Vagina (tissue), 2 donors: ENCODE measurements at regions of chr16 and their contacts with region 1.

Region 1: DNA sequence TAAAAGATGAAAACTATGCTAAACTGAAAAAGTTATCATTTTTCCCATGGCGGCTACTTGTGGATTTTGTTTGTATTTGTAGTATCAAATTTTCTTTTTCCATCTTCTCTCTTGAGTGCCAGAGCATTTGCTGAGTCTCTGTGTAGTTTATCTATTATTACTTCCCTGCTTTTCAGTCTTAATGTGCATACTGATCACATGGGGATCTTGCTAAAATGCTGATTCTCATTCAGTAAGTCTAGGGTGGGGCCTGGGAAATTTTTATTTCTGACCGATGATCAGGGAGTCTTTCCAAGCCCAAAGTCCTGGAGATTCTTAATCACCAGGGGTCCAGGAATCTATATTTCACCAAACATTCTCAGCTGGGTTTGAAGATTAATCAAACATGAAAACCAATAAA is 189.0 kb upstream of the GOT2 start:
- DNase-seq: no peak
- H3K4me3 ChIP-seq: no peak overlapping the region
- H3K27ac ChIP-seq: no peak overlapping the region
- H3K4me1 ChIP-seq: no peaks in the 10 kb centered on the region
- H3K27me3 ChIP-seq: no peaks in the 10 kb centered on the region
- CTCF ChIP-seq: no peak
- POLR2A ChIP-seq: no peak

Region 2: DNA sequence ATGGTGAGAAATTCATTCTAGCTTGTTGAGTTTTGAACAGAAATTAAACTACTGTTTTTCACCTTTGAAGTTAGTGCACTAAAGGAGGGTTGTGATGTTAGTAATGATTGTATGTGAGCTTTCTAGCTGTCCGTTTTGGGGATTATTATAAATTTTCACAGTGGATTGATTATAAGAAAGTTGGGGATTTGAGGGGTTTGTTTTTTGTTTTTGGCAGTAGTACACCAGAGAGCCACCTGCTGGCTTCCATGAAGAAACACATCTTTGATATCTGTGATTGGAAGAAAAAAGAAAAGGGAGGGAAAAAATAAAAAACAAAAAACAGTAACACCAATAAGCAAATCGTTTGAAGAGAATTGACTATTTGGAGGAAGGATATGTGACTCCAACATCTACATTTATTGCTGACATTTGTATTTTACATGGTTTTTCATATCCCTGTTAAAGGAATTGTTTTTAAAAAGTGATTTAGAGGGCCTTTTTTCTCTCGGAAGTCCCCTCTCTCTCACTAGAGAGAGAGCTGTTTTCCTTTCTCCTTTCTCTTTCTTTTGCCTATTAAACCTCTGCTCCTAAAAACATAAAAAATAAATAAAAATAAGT is 1280.5 kb after region 1 on chr16:
- intact Hi-C with region 1: loop called (anchors 5 kb)
- DNase-seq: no peak
- H3K4me3 ChIP-seq: no peak overlapping the region
- H3K27ac ChIP-seq: no peak overlapping the region
- H3K4me1 ChIP-seq: no peaks in the 10 kb centered on the region
- H3K27me3 ChIP-seq: no peaks in the 10 kb centered on the region
- CTCF ChIP-seq: no peak
- POLR2A ChIP-seq: no peak